ENCODE measurements at regions of chr12 and their contacts with region 1.

Region 1: GRCh38 chr12:108214486-108214885 is 85.4 kb downstream of the WSCD2 start:
- DNase-seq: peak in 1 of 2 donors; percentile 46
- H3K4me3 ChIP-seq: no peak overlapping the region
- H3K27ac ChIP-seq: no peak overlapping the region
- H3K4me1 ChIP-seq: no peaks in the 10 kb centered on the region
- H3K27me3 ChIP-seq: no peaks in the 10 kb centered on the region
- CTCF ChIP-seq: no peak
- POLR2A ChIP-seq: no peak

Region 2: GRCh38 chr12:108468201-108468968 is 253.9 kb after region 1 on chr12:
- intact Hi-C with region 1: loop called (anchors 10 kb)
- DNase-seq: no peak
- H3K4me3 ChIP-seq: no peak overlapping the region
- H3K27ac ChIP-seq: no peak overlapping the region
- H3K4me1 ChIP-seq: no peaks in the 10 kb centered on the region
- H3K27me3 ChIP-seq: no peaks in the 10 kb centered on the region
- CTCF ChIP-seq: no peak
- POLR2A ChIP-seq: no peak